Aorta (tissue), 5 donors: ENCODE measurements at regions of chr3 and their contacts with region 1.

Region 1: DNA sequence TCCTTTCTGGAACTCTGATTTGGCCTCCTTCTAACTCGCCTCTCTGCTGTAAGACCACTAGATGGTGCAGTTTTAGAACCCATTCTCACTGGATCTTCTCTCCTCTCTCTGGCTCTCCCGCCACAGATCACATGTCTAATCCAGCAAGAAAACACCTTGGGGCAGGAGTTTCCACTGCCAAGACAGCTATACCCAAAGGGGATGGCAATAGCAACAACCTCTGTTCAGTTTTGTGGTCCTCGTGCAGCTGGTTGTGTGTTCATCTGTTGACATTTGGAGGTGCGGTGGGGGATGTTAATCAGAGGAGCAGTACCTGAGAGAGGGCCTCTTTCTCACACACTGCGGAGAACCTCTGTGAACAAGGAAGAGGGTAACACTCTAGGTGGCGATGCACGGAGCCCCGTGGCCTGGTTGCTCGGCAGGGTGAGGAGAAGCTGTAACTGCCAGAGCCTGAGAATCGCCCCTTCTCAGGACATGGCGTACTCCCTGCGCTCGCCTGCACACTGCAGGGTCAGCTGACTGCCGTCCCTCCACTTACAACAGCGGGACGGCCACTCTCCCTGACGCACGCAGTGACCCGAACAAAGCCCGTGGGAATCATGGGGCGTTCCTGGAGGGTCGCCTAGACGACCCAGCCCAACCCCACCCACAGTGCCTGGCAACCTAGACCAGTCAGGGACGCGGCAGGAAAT is at the start of gene TEX55:
- DNase-seq: no peak
- ATAC-seq: no peak
- H3K4me3 ChIP-seq: no peak within 1 kb of the TSS
- H3K27ac ChIP-seq: no peak within 1 kb of the TSS
- H3K4me1 ChIP-seq: no peaks in the 10 kb centered on the region
- H3K27me3 ChIP-seq: no peaks in the 10 kb centered on the region
- total RNA-seq, gene TEX55: not detected

Region 2: GRCh38 chr3:118960876-118961450 is 184.7 kb before region 1 on chr3:
- intact Hi-C with region 1: no loop called
- DNase-seq: no peak
- ATAC-seq: no peak
- H3K4me3 ChIP-seq: no peak overlapping the region
- H3K27ac ChIP-seq: no peak overlapping the region
- H3K4me1 ChIP-seq: no peaks in the 10 kb centered on the region
- H3K27me3 ChIP-seq: no peaks in the 10 kb centered on the region

Region 3: DNA sequence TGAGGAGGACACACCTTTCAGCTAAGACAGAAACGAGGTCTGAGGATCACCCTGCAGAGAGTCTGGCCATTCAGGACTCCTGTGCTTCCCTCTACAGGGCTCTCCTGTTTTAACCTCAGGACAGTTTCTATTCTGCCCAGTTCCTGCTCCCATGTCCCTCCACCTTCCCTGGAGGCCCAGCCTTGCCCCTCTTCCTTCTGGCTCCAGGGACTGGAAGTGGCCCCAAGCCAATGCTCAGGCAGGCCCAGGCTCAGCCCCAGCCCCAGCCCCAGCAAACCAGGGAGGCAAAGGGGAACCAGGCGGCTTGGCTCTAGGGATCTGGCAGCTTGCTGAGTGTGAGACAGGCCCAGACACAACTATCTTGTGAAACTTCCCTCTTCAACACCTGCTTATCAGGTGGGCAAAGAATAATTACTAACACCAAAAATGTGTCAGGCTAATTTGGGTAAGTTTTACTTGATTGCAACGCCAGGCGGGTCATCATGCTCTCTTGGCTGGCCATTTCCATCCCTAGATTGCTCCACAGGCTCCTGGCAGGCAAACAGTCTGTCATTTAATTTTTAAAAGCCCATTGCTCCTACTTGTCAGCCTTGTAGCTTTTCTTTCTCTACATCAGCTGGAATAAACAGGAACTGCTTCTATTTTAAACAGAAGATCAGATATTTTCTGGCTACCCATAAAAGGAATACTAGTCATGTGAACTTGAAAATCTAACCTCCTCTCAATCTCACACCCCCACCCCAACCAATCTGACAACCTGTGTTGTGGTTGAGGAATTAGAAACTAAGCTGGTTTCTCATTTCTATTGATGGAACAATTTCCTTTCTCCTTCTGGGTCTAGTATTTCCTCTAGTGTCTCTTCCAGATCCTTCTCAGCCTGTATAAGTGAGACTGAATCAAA is 61.2 kb after region 1 on chr3:
- intact Hi-C with region 1: loop called in 1 of 2 experiments (anchors 5 kb)
- DNase-seq: no peak
- ATAC-seq: peak; percentile 56
- H3K4me3 ChIP-seq: no peak overlapping the region
- H3K27ac ChIP-seq: no peak overlapping the region
- H3K4me1 ChIP-seq: peaks cover 0 to 4% of the 10 kb centered on the region in 2 donors
- H3K27me3 ChIP-seq: no peaks in the 10 kb centered on the region